Ovary (tissue), 10 donors: ENCODE measurements at regions of chr1 and their contacts with region 1.

Region 1: GRCh38 chr1:26874896-26875295 is 11.9 kb downstream of the SFN start:
- DNase-seq: no peak
- H3K4me3 ChIP-seq: no peak overlapping the region
- H3K27ac ChIP-seq: no peak overlapping the region
- H3K4me1 ChIP-seq: no peaks in the 10 kb centered on the region
- H3K27me3 ChIP-seq: no peaks in the 10 kb centered on the region
- CTCF ChIP-seq: no peak
- EP300 ChIP-seq: no peak
- POLR2A ChIP-seq: no peak

Region 2: DNA sequence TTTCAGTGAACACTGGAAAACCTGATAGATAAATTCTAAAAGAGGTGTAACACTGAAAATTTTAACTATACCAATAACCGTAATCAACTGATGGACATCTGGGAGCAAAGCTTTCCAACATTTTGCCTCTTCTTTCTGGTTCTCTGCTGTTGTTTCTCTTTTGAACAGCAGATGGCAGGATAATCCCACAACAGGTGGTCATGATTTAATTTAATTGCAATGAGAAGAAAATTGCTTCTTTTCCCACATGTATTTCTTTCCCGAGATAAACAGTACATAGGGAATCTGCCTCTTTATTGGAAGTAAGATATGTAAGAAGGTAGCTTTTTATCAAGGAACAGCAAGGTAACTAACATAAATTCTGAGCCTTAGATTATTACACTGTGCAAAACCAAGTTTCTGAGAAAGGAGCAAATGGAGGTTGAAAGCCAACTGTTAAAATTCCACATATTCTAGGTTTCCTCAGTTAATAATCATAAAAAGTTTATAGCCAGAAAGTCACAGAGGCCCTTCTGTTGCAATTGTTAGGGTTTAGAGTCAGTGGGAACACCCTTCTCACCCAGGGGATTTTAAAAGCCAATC is 272.4 kb before region 1 on chr1:
- intact Hi-C with region 1: loop called in 2 of 4 experiments (anchors 5 to 10 kb)
- DNase-seq: peak in 1 of 5 donors; percentile 60
- H3K4me3 ChIP-seq: no peak overlapping the region
- H3K27ac ChIP-seq: no peak overlapping the region
- H3K4me1 ChIP-seq: no peaks in the 10 kb centered on the region
- H3K27me3 ChIP-seq: no peaks in the 10 kb centered on the region
- CTCF ChIP-seq: peak; percentile 81 to 97 (median 94)
- EP300 ChIP-seq: no peak
- POLR2A ChIP-seq: no peak

Region 3: DNA sequence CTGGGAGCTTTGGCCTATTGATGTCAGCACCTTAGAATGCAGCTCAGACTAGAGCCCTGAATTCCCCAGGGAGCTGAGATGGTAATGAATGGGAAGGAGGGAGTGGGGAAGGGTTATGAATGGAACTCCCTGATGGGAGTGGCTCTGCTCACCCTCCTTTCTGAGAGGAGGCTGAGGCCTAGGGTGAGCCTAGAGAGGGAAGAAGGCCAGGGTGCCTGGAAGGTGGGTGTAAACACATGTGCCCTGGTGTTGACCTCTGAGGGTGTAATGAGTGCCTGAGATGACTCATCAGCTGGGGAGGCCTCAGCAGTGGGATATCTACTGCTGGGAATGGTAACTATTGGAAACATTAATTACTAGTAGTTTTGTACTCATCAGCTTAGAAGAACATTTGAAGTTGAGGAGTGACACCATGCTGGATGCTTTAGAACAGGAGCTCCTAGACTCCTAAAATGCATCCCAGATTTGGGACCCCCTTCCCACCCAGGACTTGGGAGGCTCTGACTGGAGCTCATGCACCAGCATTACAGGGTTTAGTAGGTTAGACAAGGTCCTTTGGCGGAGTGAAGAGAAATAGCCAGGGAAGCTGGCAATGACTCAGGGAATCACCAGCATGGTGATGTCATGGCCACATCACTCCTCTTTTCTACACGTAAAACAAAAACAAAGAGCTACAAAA is 103.1 kb before region 1 on chr1:
- intact Hi-C with region 1: no loop called
- DNase-seq: peak; percentile 61 to 81 (median 70)
- H3K4me3 ChIP-seq: no peak overlapping the region
- H3K27ac ChIP-seq: peak overlapping the region; percentile 12 to 52
- H3K4me1 ChIP-seq: peaks cover 22% of the 10 kb centered on the region
- H3K27me3 ChIP-seq: no peaks in the 10 kb centered on the region
- CTCF ChIP-seq: no peak
- EP300 ChIP-seq: no peak
- POLR2A ChIP-seq: no peak

Region 4: DNA sequence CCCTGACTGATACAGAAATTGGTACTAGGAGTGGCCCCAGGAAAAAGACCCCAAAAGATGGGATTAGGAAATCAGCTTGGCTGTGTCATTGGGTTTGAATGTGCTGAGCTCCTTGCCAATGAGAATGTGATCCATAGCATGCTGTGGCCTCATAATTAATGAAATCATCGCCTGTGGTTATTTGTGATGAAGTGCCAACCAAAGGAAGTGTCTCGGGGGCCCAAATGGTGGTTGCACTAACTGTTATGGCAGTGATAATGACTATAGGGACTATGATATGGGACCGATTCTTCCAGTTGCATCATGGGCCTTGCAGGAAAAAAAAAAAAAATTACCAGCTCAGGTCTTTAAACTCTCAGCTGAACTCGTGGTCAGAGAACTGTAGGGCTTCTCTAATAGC is 63.8 kb before region 1 on chr1:
- intact Hi-C with region 1: loop called in 2 of 4 experiments (anchors 5 kb)
- DNase-seq: no peak
- H3K4me3 ChIP-seq: no peak overlapping the region
- H3K27ac ChIP-seq: no peak overlapping the region
- H3K4me1 ChIP-seq: no peaks in the 10 kb centered on the region
- H3K27me3 ChIP-seq: no peaks in the 10 kb centered on the region
- CTCF ChIP-seq: no peak
- EP300 ChIP-seq: no peak
- POLR2A ChIP-seq: no peak

Region 5: GRCh38 chr1:26826261-26827105 is 48.4 kb before region 1 on chr1 and contains the start of gene ZDHHC18:
- intact Hi-C with region 1: loop called in 1 of 4 experiments (anchors 10 kb)
- DNase-seq: peak; percentile 65 to 83 (median 74)
- H3K4me3 ChIP-seq: peak within 1 kb of the TSS; percentile 92
- H3K27ac ChIP-seq: peak within 1 kb of the TSS; percentile 69 to 74
- H3K4me1 ChIP-seq: peaks cover 11% of the 10 kb centered on the region
- H3K27me3 ChIP-seq: no peaks in the 10 kb centered on the region
- CTCF ChIP-seq: peak in 2 of 3 donors; percentile 62 to 78
- EP300 ChIP-seq: no peak
- POLR2A ChIP-seq: no peak
- total RNA-seq, gene ZDHHC18: 10.7 to 15.8 (median 12.3) TPM

Region 6: GRCh38 chr1:26853156-26853555 is 21.7 kb before region 1 on chr1:
- intact Hi-C with region 1: loop called in 1 of 4 experiments (anchors 1 kb)
- DNase-seq: peak; percentile 66 to 86 (median 79)
- H3K4me3 ChIP-seq: no peak overlapping the region
- H3K27ac ChIP-seq: no peak overlapping the region
- H3K4me1 ChIP-seq: no peaks in the 10 kb centered on the region
- H3K27me3 ChIP-seq: no peaks in the 10 kb centered on the region
- CTCF ChIP-seq: peak in 2 of 3 donors; percentile 62 to 68
- EP300 ChIP-seq: no peak
- POLR2A ChIP-seq: no peak